Right ventricle myocardium inferior (tissue), 1 donor: ENCODE measurements at regions of chr6 and their contacts with region 1.

Region 1: DNA sequence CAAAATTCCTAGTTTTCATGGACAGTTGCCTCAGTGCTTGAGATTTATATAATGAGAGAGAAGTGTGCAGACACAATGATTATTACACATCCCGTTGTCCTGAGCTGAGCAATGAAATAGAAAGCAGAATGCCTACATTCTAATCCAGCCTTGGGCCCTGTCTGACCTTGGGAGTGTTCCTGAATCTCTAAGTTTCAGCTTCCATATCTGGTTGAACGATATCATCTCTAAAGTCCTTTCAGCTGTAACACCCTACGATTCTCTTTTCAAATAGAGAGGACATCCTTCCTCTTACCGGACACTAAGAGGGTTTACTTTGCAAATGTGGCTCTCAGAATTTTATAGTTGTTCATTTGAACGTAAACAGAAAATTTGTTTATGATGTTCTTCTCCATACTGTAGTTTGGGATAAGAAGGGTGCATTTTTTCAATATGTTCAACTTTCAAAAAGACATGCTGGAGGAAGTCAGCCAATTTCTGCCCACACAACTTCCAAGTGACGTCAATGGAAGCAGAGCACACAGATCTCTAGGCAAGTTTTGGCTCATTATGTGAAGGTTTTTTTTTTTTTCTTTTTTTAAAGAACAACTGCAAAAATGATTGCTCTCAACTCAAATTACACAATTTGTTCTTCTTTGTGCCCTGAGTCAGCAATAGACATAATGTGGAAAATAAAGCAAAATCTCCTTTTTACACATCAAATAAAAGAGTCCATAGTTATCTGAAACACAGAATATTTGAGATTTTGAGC is 50.4 kb downstream of the PDE7B start:
- DNase-seq: no peak
- ATAC-seq: peak; percentile 85

Region 2: GRCh38 chr6:135851442-135852271 is 50.3 kb before region 1 on chr6 and contains the start of gene PDE7B:
- intact Hi-C with region 1: loop called (anchors 5 kb)
- DNase-seq: peak; percentile 92
- ATAC-seq: peak; percentile 96
- total RNA-seq, gene PDE7B: 18.7 TPM

Region 3: GRCh38 chr6:135869857-135870256 is 32.1 kb before region 1 on chr6:
- intact Hi-C with region 1: no loop called
- DNase-seq: no peak
- ATAC-seq: no peak

Region 4: DNA sequence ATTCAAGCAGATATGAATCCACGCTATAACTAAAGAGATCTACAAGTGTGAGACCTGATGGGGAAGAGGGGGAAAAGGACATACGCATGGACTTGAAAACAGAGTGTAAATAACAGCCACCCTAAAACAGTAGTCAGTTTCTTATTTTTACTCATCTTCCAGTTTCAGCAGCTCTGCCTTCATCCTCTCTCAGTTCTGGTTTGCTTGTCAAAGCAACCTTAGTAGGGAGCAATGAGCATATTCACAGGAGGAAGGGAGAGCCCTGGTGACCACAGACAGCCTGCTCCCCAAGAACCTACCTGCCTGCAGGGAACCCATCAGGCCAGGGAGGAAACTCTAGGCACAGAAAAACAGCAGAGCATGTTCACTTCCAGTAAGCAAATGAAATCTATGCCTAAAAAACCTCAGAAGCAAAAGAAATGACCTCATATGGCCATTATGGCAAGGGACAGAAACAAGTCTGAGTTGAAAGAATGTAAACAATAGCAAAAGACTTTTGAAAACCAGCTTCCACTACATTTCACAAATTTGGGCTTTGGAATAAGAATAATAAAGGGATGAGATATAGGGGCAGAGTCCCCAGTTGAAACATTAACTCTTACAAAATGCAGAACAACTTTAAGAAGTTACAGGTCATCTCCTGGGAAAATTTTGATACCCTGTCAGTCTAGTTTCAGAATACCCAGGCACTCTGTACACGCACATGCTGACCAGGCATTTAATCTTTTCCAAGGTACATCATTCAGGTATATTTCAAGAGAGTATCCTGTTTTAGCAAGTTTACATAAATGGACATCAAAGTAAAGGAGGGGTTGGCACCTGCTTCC is 508.5 kb after region 1 on chr6:
- intact Hi-C with region 1: no loop called
- DNase-seq: no peak
- ATAC-seq: no peak